Left cardiac atrium (tissue), 4 donors: ENCODE measurements at regions of chr1 and their contacts with region 1.

Region 1: GRCh38 chr1:232630047-232630893 is at the start of gene SIPA1L2:
- DNase-seq: peak; percentile 94
- ATAC-seq: peak; percentile 97 to 98
- total RNA-seq, gene SIPA1L2: 42.3 to 57.1 TPM

Region 2: DNA sequence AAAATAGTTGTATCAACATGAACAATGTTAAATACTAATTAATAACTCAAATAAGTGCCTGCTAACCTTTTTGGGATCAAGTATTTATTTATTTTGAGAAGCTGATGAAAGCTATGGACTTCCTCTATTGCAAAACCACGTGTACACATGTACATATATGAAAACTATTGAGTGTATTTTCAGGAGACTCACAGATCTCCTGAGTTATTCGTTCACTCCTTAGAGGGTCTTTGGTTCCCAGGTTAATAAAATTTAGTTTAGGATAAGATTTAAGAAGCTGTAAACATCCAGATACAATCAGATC is 873.2 kb before region 1 on chr1:
- intact Hi-C with region 1: loop called in 1 of 2 experiments (anchors 10 kb)
- DNase-seq: no peak
- ATAC-seq: peak in 1 of 2 donors; percentile 44

Region 3: GRCh38 chr1:232328486-232329100 is 301.7 kb before region 1 on chr1:
- intact Hi-C with region 1: loop called in 1 of 2 experiments (anchors 10 kb)
- DNase-seq: no peak
- ATAC-seq: peak; percentile 47 to 80

Region 4: GRCh38 chr1:232486454-232487207 is 143.6 kb before region 1 on chr1:
- intact Hi-C with region 1: loop called in 1 of 2 experiments (anchors 10 kb)
- DNase-seq: no peak
- ATAC-seq: peak; percentile 68 to 76

Region 5: DNA sequence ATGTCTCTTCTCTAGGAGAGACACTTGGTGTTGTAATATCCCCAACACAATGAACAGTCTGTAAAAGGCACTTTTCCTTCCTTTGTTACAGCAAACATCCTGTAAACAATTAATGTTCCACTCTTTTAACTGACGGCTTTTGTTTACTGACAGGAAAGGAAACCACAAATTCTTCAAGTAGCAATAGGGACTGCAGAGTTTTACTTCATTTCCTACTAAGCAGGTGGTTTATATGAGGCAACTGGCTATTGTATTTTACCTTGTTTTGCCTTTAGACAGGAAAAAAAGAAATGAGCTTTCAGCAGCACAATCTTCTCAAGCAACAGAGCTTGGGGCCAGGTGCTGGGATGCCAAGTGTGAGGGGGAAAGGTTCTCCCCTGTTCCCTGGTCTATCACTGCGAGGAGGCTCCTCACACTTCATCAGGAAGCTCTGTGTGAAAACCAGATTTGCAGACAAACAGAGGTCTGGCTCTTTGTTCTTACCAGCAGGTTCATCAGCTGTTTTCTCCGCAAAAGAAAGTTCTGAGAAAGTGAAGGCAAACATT is 51.5 kb before region 1 on chr1:
- intact Hi-C with region 1: loop called in 1 of 2 experiments (anchors 10 kb)
- DNase-seq: no peak
- ATAC-seq: no peak

Region 6: GRCh38 chr1:232657426-232658005 is 27.2 kb after region 1 on chr1:
- intact Hi-C with region 1: no loop called
- DNase-seq: no peak
- ATAC-seq: no peak

Region 7: GRCh38 chr1:232950197-232951176 is 320.2 kb after region 1 on chr1 and contains the start of gene NTPCR:
- intact Hi-C with region 1: loop called (anchors 5 to 10 kb)
- DNase-seq: peak; percentile 95
- ATAC-seq: peak; percentile 94 to 96
- total RNA-seq, gene NTPCR: 46.4 to 58.4 TPM

Region 8: DNA sequence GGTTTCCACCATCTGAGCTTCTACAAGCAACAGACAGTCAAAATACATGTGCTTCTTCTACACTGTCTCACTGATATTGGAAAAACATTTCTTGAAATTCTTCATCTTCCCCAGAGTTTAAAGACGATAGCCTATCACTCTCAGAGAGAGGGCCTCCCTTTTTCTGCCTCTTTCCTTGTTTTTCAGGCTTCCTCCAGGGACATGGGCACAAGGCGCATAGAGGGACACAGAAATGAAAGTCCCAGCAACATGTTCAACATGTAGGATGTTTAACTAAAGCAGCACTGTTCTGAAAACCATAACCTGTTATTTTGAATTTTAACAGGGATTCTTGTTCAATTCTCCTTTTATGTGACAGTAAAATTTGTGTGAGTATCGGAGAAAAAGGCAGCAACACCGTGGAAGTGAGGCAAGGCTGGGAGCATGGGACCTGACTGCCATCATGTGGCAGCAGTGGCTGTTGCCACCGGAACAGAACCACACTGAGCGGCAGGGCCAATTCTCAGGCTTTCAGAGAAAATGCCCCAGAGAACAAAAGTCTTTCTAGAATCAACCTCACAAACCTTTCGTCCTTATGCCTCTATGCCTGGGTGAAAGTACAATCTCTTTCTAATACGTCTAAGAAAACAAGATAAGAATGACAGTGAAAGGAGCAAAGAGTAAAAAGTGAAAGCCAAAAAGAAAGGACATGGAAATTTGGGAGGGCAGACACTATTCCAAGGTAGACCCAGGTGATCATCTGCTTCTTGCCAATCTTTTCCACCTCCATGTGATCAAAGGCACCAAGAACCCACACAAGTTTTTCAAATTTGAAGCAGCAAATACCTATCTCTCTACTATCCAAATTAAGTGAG is 610.8 kb after region 1 on chr1:
- intact Hi-C with region 1: loop called (anchors 2 to 5 kb)
- DNase-seq: peak; percentile 60
- ATAC-seq: peak; percentile 88 to 93